Gastrocnemius medialis (tissue), 4 donors: ENCODE measurements at regions of chr11 and their contacts with region 1.

Region 1: GRCh38 chr11:59295435-59295834 is 63.3 kb upstream of the OR5AN1 start:
- DNase-seq: no peak
- ATAC-seq: no peak
- H3K4me3 ChIP-seq: no peak overlapping the region
- H3K27ac ChIP-seq: no peak overlapping the region
- H3K4me1 ChIP-seq: no peaks in the 10 kb centered on the region
- H3K27me3 ChIP-seq: no peaks in the 10 kb centered on the region
- CTCF ChIP-seq: no peak
- POLR2A ChIP-seq: no peak

Region 2: GRCh38 chr11:59417023-59417422 is 121.6 kb after region 1 on chr11:
- in situ Hi-C with region 1: loop called in 1 of 4 experiments (anchors 25 kb)
- intact Hi-C with region 1: no loop called
- DNase-seq: no peak
- ATAC-seq: no peak
- H3K4me3 ChIP-seq: no peak overlapping the region
- H3K27ac ChIP-seq: no peak overlapping the region
- H3K4me1 ChIP-seq: no peaks in the 10 kb centered on the region
- H3K27me3 ChIP-seq: no peaks in the 10 kb centered on the region
- CTCF ChIP-seq: no peak
- POLR2A ChIP-seq: no peak